GM10248 (cell line): ENCODE measurements at regions of chr2 and their contacts with region 1.

Region 1: DNA sequence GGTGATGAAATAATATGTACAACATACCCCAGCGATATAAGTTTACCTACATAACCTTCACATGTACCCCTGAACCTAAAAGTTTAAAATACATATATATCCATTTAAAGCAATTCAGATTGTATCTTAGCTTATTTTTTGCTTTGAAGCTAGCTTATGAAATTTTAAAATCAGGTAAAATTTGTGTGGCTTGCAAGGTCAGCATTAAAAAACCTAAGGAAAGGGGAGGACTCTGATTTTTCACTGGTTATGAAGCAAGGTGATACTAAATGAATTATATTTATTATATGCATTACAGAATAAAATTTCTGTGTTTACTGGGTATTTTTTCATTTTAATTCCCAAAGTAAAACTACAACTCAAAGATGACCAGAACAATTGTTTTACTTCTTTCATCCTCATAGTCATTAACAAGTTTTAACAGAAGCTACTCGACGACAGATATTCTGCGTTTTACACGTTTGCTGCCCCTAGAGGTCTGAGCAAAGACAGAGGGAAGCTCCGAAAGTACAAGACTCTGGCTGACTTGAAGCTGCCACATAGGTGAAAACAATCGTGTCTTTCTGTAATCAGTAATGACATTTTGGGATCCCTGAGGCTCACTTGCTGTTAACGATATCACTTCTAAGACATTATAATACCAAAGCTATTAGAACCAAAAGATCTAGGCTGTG is 17.1 kb downstream of the PKP4 start:
- DNase-seq: no peak
- CTCF ChIP-seq: no peak

Region 2: DNA sequence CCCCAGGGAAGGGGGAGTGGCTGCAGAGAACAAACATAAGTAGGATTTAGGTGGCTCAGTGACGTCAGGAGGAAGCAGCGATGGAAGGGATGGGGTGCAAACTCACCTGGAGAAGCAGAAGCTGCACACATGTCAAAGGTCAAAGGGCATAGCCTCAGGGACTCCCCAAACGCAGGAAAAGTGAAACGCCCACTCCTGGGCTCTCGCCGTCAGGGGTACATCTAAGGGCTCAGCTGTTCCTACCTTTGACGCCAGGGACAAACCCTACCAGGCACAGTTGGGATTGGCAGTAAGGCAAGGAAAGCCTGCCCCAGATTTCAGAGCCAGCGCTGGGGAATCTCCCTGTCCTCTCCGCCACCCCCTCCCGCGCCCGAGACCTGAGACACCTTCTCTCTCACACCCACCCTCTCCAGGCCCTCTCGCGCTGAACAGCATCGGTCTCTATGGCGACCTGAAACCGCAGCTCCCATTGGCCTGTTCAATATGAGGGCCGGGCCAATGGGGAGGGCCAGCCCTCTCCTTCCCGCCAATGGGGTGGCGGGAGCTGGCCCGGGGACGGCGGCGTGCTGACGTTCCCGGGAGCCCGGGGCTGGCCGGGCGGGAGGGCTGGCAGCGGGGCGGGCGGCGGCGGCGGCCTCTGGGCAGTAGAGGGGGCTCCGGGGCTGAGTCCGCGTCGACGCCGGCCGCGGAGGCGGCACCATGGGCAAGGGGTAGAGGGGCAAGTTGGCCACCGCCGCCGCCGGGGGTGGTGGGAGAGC is 17.4 kb before region 1 on chr2 and contains the starts of genes CCDC148 and PKP4:
- CTCF ChIA-PET with region 1: interaction called, 11 read pairs
- POLR2A ChIA-PET with region 1: no interaction called
- DNase-seq: peak; percentile 96
- CTCF ChIP-seq: peak; percentile 24

Region 3: DNA sequence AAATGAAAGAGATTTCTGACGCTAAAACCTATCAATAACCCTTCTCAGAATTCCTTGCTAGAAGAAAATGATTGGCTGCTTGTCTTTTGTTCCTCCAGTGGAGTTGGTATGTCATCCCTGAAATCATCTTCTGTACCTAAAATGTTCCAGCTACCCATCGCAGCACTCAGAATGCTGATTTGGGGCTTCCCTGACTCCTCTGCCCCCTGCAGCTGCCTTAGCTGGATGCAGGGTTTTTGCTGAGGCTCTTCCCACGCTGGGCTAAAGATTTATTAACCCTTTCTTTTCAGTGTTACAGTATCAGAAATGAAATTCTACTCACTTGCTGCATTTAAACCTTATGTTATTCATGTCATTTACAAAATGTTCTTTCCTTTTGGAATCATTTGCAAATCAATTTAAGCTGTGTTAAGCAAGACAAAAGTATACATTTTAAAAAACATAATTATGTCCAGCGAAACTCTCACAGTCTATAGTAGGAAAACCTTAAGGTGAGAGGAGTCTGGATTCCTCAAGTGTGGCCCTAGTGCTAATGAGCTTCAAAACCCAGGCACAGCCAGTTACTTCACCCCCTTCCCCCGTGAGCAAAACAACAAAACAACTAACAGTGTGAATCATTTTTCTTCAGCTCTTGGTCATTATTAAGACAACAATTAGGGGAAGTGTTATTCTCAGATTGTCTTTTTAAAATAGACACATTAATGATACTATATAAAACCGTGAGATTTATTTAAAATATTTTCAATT is 15.7 kb after region 1 on chr2:
- CTCF ChIA-PET with region 1: interaction called, 12 read pairs
- POLR2A ChIA-PET with region 1: no interaction called
- DNase-seq: no peak
- CTCF ChIP-seq: no peak